ENCODE measurements at regions of chr5 and their contacts with region 1.

Region 1: DNA sequence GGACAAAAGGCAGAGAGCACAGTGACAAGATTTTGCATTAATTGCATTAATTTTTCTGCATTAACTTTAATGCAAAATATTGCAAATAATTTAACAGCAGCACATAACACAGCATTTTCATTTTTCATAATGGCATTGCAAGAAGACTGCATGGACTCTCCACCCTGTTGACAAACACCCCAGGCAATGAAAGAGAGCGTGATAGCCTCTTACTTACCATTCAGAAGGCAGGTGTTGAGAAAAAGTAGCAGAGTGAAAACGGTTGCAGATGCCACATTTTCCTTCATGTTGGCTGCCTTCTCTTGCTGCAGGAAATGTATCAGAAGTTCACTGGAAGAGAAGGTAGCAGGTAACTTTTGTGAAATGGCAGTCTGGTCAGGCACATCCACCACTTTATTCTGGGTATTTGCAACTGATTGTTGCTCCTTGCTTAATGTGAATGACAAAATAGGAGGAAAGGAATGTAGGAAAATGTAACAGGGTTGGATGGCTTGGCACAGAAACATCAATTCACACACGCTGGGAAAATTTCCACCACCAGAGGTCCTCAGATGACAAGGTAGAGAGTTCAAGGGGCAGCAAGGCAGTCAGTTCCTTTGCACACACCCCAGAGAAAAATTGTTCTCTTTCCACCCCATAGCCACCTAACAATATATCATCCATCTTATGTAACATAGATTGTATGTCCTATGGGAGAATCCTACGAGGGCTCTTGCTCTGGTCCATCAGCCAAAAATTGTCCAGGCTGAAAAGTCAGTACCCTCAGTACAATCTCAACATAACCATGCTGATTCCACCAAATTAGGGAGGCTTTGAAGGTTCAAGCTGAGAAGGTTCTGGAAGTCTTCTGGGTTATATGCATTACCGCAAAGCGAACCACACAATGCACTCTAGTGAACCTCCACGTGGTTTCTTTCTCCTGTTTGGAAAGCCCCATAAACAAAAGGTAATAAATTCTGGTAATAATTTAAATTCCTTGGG is 41.9 kb upstream of the AGXT2 start:
- DNase-seq: peak; percentile 64
- H3K4me3 ChIP-seq: no peak overlapping the region
- H3K27ac ChIP-seq: no peak overlapping the region
- H3K4me1 ChIP-seq: no peaks in the 10 kb centered on the region
- H3K27me3 ChIP-seq: no peaks in the 10 kb centered on the region
- CTCF ChIP-seq: peak; percentile 74

Region 2: GRCh38 chr5:35026280-35026840 is 63.3 kb before region 1 on chr5:
- CTCF ChIA-PET with region 1: no interaction called
- POLR2A ChIA-PET with region 1: no interaction called
- intact Hi-C with region 1: no loop called
- DNase-seq: no peak
- H3K4me3 ChIP-seq: no peak overlapping the region
- H3K27ac ChIP-seq: no peak overlapping the region
- H3K4me1 ChIP-seq: no peaks in the 10 kb centered on the region
- H3K27me3 ChIP-seq: no peaks in the 10 kb centered on the region
- CTCF ChIP-seq: no peak

Region 3: GRCh38 chr5:35112300-35112699 is 22.7 kb after region 1 on chr5:
- CTCF ChIA-PET with region 1: no interaction called
- POLR2A ChIA-PET with region 1: no interaction called
- intact Hi-C with region 1: no loop called
- DNase-seq: no peak
- H3K4me3 ChIP-seq: no peak overlapping the region
- H3K27ac ChIP-seq: no peak overlapping the region
- H3K4me1 ChIP-seq: no peaks in the 10 kb centered on the region
- H3K27me3 ChIP-seq: peaks cover 11% of the 10 kb centered on the region
- CTCF ChIP-seq: no peak

Region 4: GRCh38 chr5:35182541-35183535 is 93.2 kb after region 1 on chr5:
- CTCF ChIA-PET with region 1: no interaction called
- POLR2A ChIA-PET with region 1: no interaction called
- intact Hi-C with region 1: loop called (anchors 1 kb)
- DNase-seq: peak; percentile 72
- H3K4me3 ChIP-seq: no peak overlapping the region
- H3K27ac ChIP-seq: no peak overlapping the region
- H3K4me1 ChIP-seq: no peaks in the 10 kb centered on the region
- H3K27me3 ChIP-seq: peaks cover 5% of the 10 kb centered on the region
- CTCF ChIP-seq: peak; percentile 71

Region 5: DNA sequence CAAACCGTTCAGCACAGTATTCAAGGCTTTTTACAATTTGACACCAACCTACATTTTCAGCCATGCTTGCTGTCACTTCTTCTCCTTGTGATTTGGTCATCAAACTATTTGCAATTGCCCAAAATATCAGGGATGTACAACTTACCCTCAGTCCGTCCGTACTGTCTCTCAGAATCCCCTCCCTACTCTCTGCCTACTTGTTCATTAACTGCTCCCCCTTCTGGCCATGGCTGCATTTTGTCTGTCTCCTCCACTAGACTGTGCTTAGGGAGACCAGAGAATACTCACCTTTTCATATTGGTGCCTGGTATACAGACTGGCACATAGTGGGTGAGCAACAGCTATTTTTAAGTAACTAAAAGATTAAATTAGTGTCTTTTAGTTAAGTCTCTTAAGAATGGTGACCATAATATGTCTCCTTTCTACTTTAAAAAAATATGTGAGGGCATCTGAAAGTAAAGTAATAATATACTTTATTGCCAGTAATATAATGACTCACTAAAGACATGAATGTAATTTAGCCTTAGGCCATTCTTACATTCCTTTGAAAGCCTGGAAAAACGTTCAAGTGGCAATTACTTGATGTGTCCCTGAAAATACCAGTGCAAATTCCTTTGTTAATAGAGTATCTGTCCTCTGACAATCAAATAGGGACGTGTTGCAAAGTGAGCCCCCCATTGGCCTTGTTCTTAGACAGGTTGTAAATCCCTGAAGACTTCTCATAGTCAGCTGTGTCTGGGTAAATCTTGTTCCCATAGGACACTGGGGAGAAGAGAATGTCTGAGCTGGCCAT is 112.9 kb after region 1 on chr5:
- CTCF ChIA-PET with region 1: no interaction called
- POLR2A ChIA-PET with region 1: no interaction called
- intact Hi-C with region 1: loop called (anchors 5 kb)
- DNase-seq: peak; percentile 63
- H3K4me3 ChIP-seq: no peak overlapping the region
- H3K27ac ChIP-seq: no peak overlapping the region
- H3K4me1 ChIP-seq: no peaks in the 10 kb centered on the region
- H3K27me3 ChIP-seq: peaks cover 10% of the 10 kb centered on the region
- CTCF ChIP-seq: peak; percentile 73

Region 6: GRCh38 chr5:35345222-35345621 is 255.6 kb after region 1 on chr5:
- CTCF ChIA-PET with region 1: no interaction called
- POLR2A ChIA-PET with region 1: no interaction called
- intact Hi-C with region 1: loop called (anchors 10 kb)
- DNase-seq: peak; percentile 8
- H3K4me3 ChIP-seq: no peak overlapping the region
- H3K27ac ChIP-seq: no peak overlapping the region
- H3K4me1 ChIP-seq: no peaks in the 10 kb centered on the region
- H3K27me3 ChIP-seq: no peaks in the 10 kb centered on the region
- CTCF ChIP-seq: no peak